Heart left ventricle (tissue), 16 donors: ENCODE measurements at regions of chr16 and their contacts with region 1.

Region 1: GRCh38 chr16:22206013-22206841 is at the start of gene EEF2K:
- DNase-seq: peak; percentile 89 to 95 (median 93)
- ATAC-seq: peak; percentile 87 to 94 (median 92)
- H3K4me3 ChIP-seq: peak within 1 kb of the TSS; percentile 77 to 98 (median 88)
- H3K27ac ChIP-seq: peak within 1 kb of the TSS; percentile 89 to 97 (median 92)
- H3K4me1 ChIP-seq: peaks cover 0 to 44% (median 17%) of the 10 kb centered on the region in 12 donors
- H3K27me3 ChIP-seq: no peaks in the 10 kb centered on the region
- CTCF ChIP-seq: peak; percentile 71 to 95 (median 85)
- POLR2A ChIP-seq: peak in 1 of 2 donors; percentile 53
- total RNA-seq, gene EEF2K: 16.4 to 33.6 (median 24.6) TPM

Region 2: GRCh38 chr16:22052980-22053379 is 153.2 kb before region 1 on chr16:
- intact Hi-C with region 1: no loop called
- DNase-seq: no peak
- ATAC-seq: no peak
- H3K4me3 ChIP-seq: no peak overlapping the region
- H3K27ac ChIP-seq: no peak overlapping the region
- H3K4me1 ChIP-seq: peaks cover 0 to 12% (median 0%) of the 10 kb centered on the region in 12 donors
- H3K27me3 ChIP-seq: no peaks in the 10 kb centered on the region
- CTCF ChIP-seq: no peak
- POLR2A ChIP-seq: no peak

Region 3: DNA sequence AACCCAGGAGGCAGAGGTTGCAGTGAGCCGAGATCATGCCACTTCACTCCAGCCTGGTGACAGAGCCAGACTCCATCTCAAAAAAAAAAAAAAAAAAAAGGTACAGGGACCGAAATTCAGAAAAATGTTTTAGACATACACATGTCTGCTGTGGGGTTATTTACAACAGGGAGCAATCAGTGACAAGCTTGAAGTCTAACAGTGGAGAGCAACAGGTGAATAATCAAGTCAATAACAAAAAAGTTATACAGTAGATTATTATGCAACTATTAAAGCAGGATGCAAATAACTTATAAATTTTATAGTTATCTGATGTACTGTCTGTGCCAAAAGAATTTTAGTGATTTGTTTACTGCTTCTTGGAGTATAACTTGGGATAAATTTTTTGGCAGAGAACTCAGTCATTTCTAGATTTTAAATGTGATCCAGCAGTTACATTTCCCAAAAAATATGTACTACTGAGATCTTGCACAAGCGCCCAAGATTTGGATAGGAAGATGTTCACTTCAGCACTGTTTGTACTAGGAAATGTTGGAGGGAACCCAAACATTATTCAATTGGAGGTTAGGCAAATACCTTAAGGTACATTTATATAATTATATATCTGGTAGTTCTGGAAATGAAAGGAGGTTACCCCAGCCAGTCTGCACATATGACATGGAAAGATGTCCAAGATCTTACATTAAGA is 33.9 kb after region 1 on chr16:
- intact Hi-C with region 1: loop called in 1 of 10 experiments (anchors 5 kb)
- DNase-seq: no peak
- ATAC-seq: peak in 1 of 4 donors; percentile 64
- H3K4me3 ChIP-seq: no peak overlapping the region
- H3K27ac ChIP-seq: peak overlapping the region in 4 of 12 donors; percentile 9 to 81 (median 60)
- H3K4me1 ChIP-seq: peaks cover 0 to 28% (median 6%) of the 10 kb centered on the region in 12 donors
- H3K27me3 ChIP-seq: no peaks in the 10 kb centered on the region
- CTCF ChIP-seq: no peak
- POLR2A ChIP-seq: no peak

Region 4: DNA sequence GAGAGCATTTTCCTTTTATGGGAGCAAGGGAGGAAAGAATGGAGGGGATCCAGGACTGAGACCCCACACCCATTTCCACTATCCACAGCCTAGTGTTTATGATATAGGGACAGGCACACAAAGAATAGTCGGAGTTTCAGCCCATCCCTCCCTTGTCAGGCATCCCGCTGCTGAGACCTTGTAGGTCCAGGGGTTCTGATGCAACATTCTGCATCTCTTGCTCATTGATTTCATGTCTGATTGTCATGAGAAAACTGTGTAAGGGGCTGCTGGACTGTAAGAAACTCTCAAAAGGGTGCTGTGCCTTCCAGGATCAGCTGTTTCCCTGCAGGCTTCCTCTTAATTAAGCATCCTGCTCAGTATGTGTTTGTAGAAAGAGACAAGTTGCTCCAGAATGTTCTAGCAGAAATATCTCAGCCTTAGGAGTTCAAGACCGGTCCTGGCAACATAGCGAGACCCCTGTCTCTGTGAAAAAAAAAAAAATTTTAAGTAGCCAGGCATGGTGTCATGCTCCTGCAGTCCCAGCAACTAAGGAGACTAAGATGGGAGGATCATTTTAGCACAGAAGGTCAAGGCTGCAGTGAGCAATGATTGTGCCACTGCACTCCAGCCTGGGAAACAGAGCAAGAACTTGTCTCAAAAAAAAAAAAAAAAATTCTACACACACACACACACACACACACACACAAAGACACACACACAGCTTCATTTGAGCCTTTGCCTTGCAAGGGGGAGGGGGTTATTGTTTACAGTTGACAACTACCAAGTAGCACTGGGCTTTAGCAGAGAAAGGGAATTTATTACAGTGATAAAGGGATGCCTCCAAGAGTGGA is 85.8 kb after region 1 on chr16:
- intact Hi-C with region 1: loop called in 7 of 10 experiments (anchors 1 to 5 kb)
- DNase-seq: no peak
- ATAC-seq: no peak
- H3K4me3 ChIP-seq: no peak overlapping the region
- H3K27ac ChIP-seq: no peak overlapping the region
- H3K4me1 ChIP-seq: peaks cover 0 to 9% (median 1%) of the 10 kb centered on the region in 12 donors
- H3K27me3 ChIP-seq: no peaks in the 10 kb centered on the region
- CTCF ChIP-seq: no peak
- POLR2A ChIP-seq: no peak

Region 5: GRCh38 chr16:22335668-22336246 is 129.5 kb after region 1 on chr16:
- intact Hi-C with region 1: no loop called
- DNase-seq: no peak
- ATAC-seq: peak in 2 of 4 donors; percentile 36 to 45
- H3K4me3 ChIP-seq: no peak overlapping the region
- H3K27ac ChIP-seq: no peak overlapping the region
- H3K4me1 ChIP-seq: peaks cover 0 to 3% (median 0%) of the 10 kb centered on the region in 12 donors
- H3K27me3 ChIP-seq: no peaks in the 10 kb centered on the region
- CTCF ChIP-seq: no peak
- POLR2A ChIP-seq: no peak